ENCODE measurements at regions of chr12 and their contacts with region 1.

Region 1: GRCh38 chr12:12724661-12725545 is 7.7 kb downstream of the CDKN1B start:
- DNase-seq: peak; percentile 94
- ATAC-seq: peak; percentile 62
- H3K4me3 Mint-ChIP-seq: peak overlapping the region; percentile 87
- H3K27ac Mint-ChIP-seq: peak overlapping the region; percentile 96
- H3K4me1 Mint-ChIP-seq: peaks cover 20% of the 10 kb centered on the region
- H3K27me3 Mint-ChIP-seq: no peaks in the 10 kb centered on the region

Region 2: DNA sequence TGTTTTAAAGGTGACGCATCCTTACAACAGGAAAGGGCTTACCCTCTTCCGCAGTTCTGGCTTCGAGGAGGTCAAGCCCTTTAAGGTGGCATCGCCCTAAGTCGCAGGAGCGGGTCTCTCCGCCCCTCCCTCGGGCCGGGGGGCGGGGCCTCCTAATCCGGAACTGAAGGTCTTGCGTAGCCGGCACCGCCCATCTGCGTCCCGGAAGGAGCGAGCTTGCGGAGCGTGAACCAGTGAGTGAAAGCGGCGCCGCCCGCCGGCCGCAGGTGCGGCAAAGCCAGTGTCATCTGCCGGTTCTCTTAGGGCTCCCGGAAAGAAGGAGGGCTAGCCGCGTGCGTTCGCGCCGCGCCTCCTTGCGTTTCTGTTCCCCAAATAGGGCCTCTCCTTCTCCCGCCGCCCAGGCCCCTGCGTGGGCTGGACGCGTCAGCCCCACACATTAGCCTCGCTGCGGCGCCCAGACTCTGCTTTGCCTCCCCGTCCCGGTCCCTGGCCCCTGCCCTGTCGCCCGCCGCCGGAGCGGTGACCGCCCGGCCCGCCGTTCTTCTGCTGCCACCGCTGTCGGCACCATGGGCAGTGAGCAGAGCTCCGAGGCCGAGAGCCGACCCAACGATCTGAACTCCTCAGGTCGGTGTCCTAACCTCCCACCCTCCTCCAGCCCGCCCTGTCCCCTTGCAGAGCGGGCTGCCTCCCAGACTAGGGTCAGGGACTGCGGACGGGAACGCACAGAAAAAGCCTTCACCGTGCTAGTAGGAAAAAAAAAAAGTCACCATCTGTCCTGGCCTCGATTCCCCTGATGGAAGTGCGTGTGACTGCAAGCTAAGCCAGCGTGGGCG is 367.8 kb before region 1 on chr12 and contains the start of gene BORCS5:
- CTCF ChIA-PET with region 1: interaction called, 10 read pairs
- POLR2A ChIA-PET with region 1: interaction called, 38 read pairs
- DNase-seq: peak; percentile 99
- ATAC-seq: peak; percentile 94
- H3K4me3 Mint-ChIP-seq: peak within 1 kb of the TSS; percentile 88
- H3K27ac Mint-ChIP-seq: peak within 1 kb of the TSS; percentile 94
- H3K4me1 Mint-ChIP-seq: peaks cover 48% of the 10 kb centered on the region
- H3K27me3 Mint-ChIP-seq: no peaks in the 10 kb centered on the region
- total RNA-seq, gene BORCS5: 18.8 to 21.2 TPM

Region 3: DNA sequence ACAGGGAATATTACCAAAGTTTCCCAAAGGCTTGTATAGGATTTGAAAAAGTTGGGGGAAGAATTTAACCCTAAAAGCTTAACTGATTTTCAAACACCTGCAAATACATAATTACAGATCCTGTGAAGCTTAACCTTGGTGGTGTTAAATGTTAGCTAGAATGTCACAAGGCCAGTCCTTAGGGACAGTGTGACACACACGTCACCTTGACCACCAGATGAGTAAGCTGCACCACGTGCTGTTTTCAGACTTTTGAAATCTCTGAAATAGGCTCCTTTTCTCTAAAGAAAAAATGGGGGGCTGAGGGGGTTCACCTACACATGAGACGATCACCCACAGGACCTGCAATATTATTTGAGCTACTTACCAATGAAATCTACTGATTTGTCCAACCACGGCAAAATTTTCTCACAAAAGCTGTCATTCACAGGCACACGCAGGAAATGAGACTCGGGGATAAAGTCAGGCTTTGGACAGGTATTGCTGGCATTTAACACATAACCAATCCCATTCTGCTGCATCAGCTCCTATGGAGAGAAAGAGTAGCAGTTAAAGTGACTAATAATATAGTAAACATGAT is 238.2 kb before region 1 on chr12:
- CTCF ChIA-PET with region 1: no interaction called
- POLR2A ChIA-PET with region 1: interaction called, 11 read pairs
- DNase-seq: no peak
- ATAC-seq: no peak
- H3K4me3 Mint-ChIP-seq: no peak overlapping the region
- H3K27ac Mint-ChIP-seq: no peak overlapping the region
- H3K4me1 Mint-ChIP-seq: peaks cover 39% of the 10 kb centered on the region
- H3K27me3 Mint-ChIP-seq: no peaks in the 10 kb centered on the region

Region 4: DNA sequence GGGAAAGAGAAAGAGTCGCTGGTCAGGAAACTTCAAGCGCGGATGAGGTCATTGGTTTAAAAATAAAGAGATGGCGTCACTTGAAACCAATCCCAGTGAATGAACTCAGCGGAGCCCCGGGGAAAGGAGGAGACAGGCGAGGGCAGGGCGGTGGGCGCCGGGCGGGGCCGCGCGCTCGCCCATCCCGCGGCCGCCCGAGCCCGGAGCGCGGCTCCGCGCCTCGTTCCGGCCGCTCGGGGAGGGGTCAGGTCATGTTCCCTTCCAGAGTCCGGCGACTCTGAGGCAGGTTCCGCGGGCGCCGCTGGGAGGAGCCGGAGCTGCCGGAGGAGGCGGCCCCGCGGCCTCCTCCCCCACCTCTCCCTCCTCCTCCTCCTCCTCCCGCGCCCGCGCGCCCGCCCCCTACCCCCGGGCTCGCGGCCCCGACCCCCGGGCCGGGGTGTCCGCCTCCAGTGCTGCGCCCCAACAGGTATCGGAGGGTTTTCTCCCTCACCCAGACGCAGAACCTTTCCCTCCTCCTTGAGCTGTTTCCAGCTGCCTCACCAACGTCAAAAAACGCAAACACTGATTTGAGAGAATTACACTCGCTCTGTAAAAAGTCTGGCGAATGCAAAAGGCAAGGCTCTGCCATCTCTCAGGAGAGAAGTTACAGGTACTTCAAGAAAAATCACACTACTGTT is 162.2 kb before region 1 on chr12 and contains the start of gene DUSP16:
- CTCF ChIA-PET with region 1: no interaction called
- POLR2A ChIA-PET with region 1: interaction called, 10 read pairs
- DNase-seq: peak; percentile 88
- ATAC-seq: peak; percentile 88
- H3K4me3 Mint-ChIP-seq: peak within 1 kb of the TSS; percentile 83
- H3K27ac Mint-ChIP-seq: peak within 1 kb of the TSS; percentile 91
- H3K4me1 Mint-ChIP-seq: peaks cover 35% of the 10 kb centered on the region
- H3K27me3 Mint-ChIP-seq: peaks cover 5% of the 10 kb centered on the region
- total RNA-seq, gene DUSP16: 17.4 to 19.0 TPM

Region 5: GRCh38 chr12:12663644-12664294 is 61.1 kb before region 1 on chr12:
- CTCF ChIA-PET with region 1: no interaction called
- POLR2A ChIA-PET with region 1: no interaction called
- DNase-seq: no peak
- ATAC-seq: no peak
- H3K4me3 Mint-ChIP-seq: no peak overlapping the region
- H3K27ac Mint-ChIP-seq: no peak overlapping the region
- H3K4me1 Mint-ChIP-seq: peaks cover 1% of the 10 kb centered on the region
- H3K27me3 Mint-ChIP-seq: no peaks in the 10 kb centered on the region

Region 6: DNA sequence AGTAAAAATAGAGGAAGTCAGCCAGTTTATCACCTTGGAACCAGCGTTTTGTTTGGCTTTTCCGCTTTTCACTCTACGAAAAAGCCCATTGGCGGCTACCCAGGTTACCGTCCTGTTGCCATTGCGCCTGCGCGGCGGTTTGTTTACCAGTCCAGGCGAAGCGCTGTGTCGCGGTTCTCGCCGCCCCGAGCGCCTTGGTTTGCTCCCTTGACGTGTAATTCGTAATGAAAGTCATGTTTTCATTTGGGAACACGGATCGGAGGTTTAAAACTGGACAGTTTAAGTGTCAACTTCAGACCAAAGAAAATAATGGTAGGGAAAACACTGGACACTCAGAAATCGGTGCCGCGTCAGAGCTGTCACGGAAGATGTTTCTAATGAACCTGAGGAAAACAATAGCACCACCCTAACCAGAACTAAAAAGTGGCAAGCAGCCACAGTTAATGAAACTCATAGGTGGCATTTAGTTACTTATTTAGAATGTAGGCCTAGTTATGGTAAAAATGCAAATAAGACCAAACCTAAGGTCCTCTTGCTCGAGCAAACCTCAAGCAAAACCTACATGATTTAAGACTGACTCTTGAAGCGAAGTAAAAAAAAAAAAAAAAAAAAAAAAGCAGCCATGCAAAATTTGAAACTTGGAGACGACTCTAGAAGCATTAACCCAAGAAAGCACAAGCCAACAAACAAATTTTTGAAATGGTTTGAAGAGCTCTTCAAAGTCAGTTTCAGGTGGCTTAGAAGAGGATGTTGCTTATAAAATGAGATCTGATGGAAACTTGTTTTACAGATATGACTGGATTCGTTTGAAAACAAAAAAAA is 28.1 kb before region 1 on chr12:
- CTCF ChIA-PET with region 1: interaction called, 8 read pairs
- POLR2A ChIA-PET with region 1: interaction called, 258 read pairs
- DNase-seq: peak; percentile 94
- ATAC-seq: peak; percentile 86
- H3K4me3 Mint-ChIP-seq: peak overlapping the region; percentile 91
- H3K27ac Mint-ChIP-seq: peak overlapping the region; percentile 98
- H3K4me1 Mint-ChIP-seq: peaks cover 43% of the 10 kb centered on the region
- H3K27me3 Mint-ChIP-seq: no peaks in the 10 kb centered on the region

Region 7: GRCh38 chr12:12837025-12837872 is 112.3 kb after region 1 on chr12:
- CTCF ChIA-PET with region 1: no interaction called
- POLR2A ChIA-PET with region 1: no interaction called
- DNase-seq: peak; percentile 52
- ATAC-seq: peak; percentile 69
- H3K4me3 Mint-ChIP-seq: no peak overlapping the region
- H3K27ac Mint-ChIP-seq: no peak overlapping the region
- H3K4me1 Mint-ChIP-seq: peaks cover 14% of the 10 kb centered on the region
- H3K27me3 Mint-ChIP-seq: no peaks in the 10 kb centered on the region